ENCODE measurements at regions of chr5 and their contacts with region 1.

Region 1: GRCh38 chr5:134758504-134759341 is at the start of gene DDX46:
- DNase-seq: peak; percentile 96

Region 2: GRCh38 chr5:134738133-134738962 is 20.4 kb before region 1 on chr5 and contains the start of gene CAMLG:
- CTCF ChIA-PET with region 1: interaction called, 6 read pairs
- POLR2A ChIA-PET with region 1: interaction called, 59 read pairs
- DNase-seq: peak; percentile 93